ENCODE measurements at regions of chr15 and their contacts with region 1.

Region 1: DNA sequence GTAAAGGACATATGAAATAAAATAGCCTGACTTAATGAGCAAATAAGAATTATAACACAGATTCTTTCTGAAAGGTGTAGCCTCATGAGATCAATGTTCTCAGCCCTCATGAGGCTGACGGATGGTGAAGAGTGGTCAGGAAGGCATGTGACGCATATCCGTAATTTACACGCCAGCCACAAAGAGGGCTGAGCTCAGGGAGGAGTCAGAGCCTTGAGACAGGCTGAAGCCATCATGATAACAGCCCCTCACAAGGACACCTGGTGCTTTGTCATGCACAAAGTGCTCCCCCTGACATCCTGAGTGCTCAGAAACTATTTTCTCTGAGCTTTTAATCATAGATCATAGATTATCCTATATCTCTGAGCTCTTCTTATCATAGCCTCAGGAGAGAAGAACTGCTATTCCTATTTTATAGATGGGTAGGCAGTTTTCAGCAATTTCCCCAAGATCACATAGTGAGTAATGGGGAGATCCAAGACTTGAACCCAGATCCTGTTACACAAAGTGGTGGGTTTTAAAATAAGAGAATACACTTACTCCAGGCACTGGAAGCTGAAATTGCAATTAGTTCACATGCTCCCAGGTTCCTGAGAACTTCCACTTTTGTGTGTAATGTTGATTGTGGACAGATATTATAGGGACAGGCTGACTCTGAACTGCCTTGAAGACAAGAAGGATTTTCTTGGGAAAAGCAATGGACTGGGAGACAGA is 267.1 kb downstream of the RPLP1 start:
- DNase-seq: no peak
- H3K4me3 Mint-ChIP-seq: no peak overlapping the region
- H3K27ac Mint-ChIP-seq: no peak overlapping the region
- H3K4me1 Mint-ChIP-seq: peaks cover 24% of the 10 kb centered on the region
- H3K27me3 Mint-ChIP-seq: peaks cover 30% of the 10 kb centered on the region
- CTCF ChIP-seq: no peak

Region 2: DNA sequence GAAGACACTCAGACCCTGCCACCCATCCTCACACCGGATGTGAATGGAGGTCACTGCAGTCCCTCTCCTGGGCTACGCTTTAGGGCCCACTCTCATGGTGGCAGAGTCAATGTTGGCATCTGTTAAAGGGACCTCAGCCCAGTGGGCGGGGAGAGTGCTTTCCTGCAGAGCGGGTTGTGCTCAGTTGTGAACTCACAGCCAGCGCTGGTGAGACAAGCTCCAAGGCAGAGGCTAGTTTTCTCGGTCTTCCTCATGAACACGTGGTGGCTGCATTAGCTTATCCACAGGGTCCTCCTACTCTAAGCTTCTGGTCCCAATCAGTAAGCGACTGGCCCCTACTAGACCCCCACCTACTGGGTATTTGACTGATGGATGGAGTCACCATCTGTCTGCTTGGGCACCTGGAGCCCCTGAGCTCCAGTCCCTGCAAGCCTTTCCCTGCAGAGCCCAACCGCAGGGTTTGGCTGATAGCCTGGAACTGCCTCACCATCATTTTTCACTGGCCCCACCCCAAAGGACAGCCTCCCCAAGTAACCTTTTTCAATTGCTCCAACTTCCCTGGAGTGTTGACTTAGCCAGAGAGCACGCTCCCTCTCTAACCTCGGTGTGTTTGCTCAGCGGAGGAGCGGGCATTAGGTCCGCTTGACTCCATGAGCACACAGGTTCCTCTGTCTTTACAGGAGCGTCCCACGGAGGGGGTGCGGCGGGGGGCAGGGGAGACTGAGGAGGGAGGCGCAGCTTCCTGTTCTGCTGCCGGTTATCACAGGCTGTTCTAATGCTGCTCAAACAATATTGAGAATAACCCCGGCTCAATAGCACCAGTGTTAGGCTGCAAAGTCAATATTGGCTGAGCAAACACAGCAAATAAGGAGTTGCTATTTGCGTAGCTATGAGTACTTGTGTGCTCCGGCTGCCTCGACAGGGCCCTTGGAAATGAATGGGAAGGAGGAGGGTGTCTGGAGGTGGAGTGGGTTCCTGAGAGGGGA is 125.4 kb before region 1 on chr15:
- CTCF ChIA-PET with region 1: interaction called, 3 read pairs
- intact Hi-C with region 1: loop called (anchors 5 kb)
- DNase-seq: peak; percentile 97
- H3K4me3 Mint-ChIP-seq: peak overlapping the region; percentile 51
- H3K27ac Mint-ChIP-seq: peak overlapping the region; percentile 57
- H3K4me1 Mint-ChIP-seq: peaks cover 52% of the 10 kb centered on the region
- H3K27me3 Mint-ChIP-seq: peaks cover 65% of the 10 kb centered on the region
- CTCF ChIP-seq: no peak

Region 3: DNA sequence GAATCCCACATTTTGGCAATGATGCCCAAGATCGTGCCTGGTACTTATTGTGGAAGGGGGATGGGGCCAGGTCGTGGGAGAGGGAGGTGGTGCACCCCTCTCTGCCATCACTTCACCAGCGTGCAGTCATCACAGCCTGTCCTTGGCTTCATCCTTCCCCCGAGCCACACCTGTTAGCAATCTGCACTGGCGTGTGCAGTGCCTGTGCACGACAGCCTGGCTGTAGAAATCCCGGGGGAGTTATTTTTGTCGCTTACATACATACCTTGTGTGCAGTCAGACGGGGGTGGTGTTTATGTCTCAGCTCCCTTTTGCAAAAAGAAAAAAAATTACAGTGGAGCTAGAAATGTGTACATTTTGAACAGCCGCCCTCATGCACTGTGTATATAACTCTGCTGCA is 162.1 kb after region 1 on chr15:
- CTCF ChIA-PET with region 1: no interaction called
- intact Hi-C with region 1: no loop called
- DNase-seq: no peak
- H3K4me3 Mint-ChIP-seq: no peak overlapping the region
- H3K27ac Mint-ChIP-seq: no peak overlapping the region
- H3K4me1 Mint-ChIP-seq: no peaks in the 10 kb centered on the region
- H3K27me3 Mint-ChIP-seq: peaks cover 84% of the 10 kb centered on the region
- CTCF ChIP-seq: no peak

Measured in Calu3 (cell line).